Thyroid gland (tissue), 4 donors: ENCODE measurements at regions of chr2 and their contacts with region 1.

Region 1: DNA sequence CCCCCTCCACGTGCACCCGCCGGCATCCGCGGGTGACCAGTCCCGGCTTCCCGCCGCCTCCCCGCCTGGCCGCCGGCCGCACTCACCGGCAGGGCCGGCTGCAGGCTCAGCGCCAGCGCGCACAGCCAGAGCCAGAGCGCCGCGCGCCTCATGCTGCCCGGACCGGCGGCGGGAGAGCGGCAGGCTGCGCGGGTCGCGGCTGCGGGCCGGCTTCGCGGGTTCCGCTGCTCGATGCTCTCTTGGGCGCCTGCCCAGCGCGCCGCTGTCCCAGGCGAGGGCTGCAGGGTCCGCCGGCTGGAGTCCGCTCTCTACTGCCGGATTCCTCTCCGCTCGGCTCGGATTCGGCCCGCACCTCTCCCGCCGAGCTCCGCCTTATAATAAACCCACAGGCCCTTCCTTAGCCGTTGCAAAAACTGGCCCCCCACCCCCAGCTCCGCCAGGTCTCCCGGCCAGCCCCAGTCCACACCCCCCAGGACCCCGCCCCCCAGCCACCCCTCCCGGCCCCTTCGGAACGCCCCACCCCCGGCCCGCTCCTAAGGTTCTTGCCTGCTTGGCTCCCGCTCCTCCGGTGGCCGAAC is at the start of gene SDC1:
- DNase-seq: peak; percentile 73 to 74
- H3K4me3 ChIP-seq: peak within 1 kb of the TSS; percentile 31 to 49 (median 44)
- H3K27ac ChIP-seq: peak within 1 kb of the TSS; percentile 81 to 90 (median 86)
- H3K4me1 ChIP-seq: peaks cover 17 to 22% of the 10 kb centered on the region in 2 donors
- H3K27me3 ChIP-seq: no peaks in the 10 kb centered on the region
- CTCF ChIP-seq: no peak
- POLR2A ChIP-seq: peak in 1 of 2 donors; percentile 35
- total RNA-seq, gene SDC1: 21.9 to 28.0 (median 24.7) TPM

Region 2: DNA sequence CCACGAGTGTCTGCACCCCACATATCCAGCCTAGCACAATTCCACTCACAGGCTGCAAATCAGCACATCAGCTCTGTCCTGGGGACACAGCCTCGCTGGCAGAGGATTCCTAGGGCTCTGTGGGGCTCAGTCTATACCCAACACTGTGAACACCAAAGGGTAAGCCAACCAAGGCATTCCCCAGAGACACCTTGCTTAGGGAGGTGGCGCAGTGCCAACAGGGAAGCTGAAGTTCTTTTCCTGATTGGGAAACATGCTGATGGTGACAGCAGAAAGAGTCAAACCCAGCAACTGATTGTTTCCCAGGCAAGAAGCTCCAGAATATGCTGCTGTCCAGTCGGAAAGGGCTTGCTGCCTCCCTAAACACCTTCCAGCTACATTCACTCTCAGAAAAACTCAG is 378.8 kb before region 1 on chr2:
- intact Hi-C with region 1: no loop called
- DNase-seq: no peak
- H3K4me3 ChIP-seq: no peak overlapping the region
- H3K27ac ChIP-seq: no peak overlapping the region
- H3K4me1 ChIP-seq: no peaks in the 10 kb centered on the region
- H3K27me3 ChIP-seq: no peaks in the 10 kb centered on the region
- CTCF ChIP-seq: no peak
- POLR2A ChIP-seq: no peak

Region 3: DNA sequence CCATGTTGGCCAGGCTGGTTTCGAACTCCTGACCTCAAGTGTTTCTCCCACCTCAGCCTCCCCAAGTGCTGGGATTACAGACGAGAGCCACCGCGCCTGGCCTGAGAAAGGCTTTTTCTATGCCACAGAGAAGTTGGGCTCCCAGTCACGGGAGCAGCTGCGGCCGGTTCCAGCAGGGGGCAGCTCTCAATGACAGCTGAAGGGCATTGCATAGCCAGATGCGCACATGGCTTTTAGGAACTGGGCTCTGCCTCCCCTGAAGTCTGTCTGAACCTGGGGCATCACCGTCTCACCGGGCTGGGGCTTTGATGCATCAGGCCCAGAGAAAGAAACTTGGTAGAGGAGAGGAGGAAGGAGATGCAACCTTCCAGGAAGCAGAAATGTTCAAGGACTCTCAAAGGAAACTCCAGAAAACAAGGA is 89.2 kb before region 1 on chr2:
- intact Hi-C with region 1: loop called (anchors 5 kb)
- DNase-seq: peak; percentile 85 to 89
- H3K4me3 ChIP-seq: no peak overlapping the region
- H3K27ac ChIP-seq: peak overlapping the region; percentile 26 to 49 (median 36)
- H3K4me1 ChIP-seq: no peaks in the 10 kb centered on the region
- H3K27me3 ChIP-seq: no peaks in the 10 kb centered on the region
- CTCF ChIP-seq: peak; percentile 27 to 96 (median 84)
- POLR2A ChIP-seq: no peak